ENCODE measurements at regions of chr22 and their contacts with region 1.

Region 1: GRCh38 chr22:45309472-45310227 is at the start of gene FAM118A:
- DNase-seq: peak; percentile 92
- H3K4me3 Mint-ChIP-seq: peak within 1 kb of the TSS; percentile 81
- H3K27ac Mint-ChIP-seq: peak within 1 kb of the TSS; percentile 85
- H3K4me1 Mint-ChIP-seq: peaks cover 19% of the 10 kb centered on the region
- H3K27me3 Mint-ChIP-seq: no peaks in the 10 kb centered on the region
- CTCF ChIP-seq: no peak
- total RNA-seq, gene FAM118A: 16.0 and 16.7 TPM in 2 replicates

Region 2: DNA sequence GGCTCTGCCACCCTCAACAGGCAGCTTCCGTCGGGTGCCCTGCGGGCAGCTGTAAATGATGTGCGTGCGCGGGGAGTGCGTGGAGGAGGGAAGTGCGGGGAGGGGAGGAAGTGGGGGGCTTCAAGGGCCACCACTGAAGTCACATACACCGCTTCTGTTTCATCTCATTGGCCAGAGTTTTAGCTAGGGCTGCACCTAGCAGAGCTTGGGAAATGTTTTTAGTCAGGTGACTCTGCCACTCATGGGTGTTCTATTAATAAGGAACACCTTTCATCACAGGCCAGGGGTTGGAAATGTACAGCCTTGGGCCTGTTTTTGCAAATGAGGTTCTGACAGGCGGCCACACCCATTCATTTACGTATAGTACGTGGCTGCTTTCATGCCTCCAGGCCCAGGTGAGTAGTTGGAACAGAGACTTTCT is 14.7 kb after region 1 on chr22:
- CTCF ChIA-PET with region 1: no interaction called
- POLR2A ChIA-PET with region 1: interaction called, 16 read pairs
- intact Hi-C with region 1: no loop called
- DNase-seq: no peak
- H3K4me3 Mint-ChIP-seq: no peak overlapping the region
- H3K27ac Mint-ChIP-seq: no peak overlapping the region
- H3K4me1 Mint-ChIP-seq: peaks cover 6% of the 10 kb centered on the region
- H3K27me3 Mint-ChIP-seq: no peaks in the 10 kb centered on the region
- CTCF ChIP-seq: no peak